SK-N-SH (cell line): ENCODE measurements at regions of chr1 and their contacts with region 1.

Region 1: GRCh38 chr1:59699227-59699847 is 115.4 kb upstream of the HOOK1 start:
- DNase-seq: peak; percentile 31
- H3K4me3 ChIP-seq: peak overlapping the region in 1 of 2 experiments; percentile 24; a peak in 1 of 4 replicates
- H3K27ac ChIP-seq: peak overlapping the region; percentile 56 to 68; a peak in 3 of 4 replicates
- H3K4me1 ChIP-seq: peaks cover 12 to 23% of the 10 kb centered on the region in 2 experiments
- H3K27me3 ChIP-seq: no peaks in the 10 kb centered on the region
- CTCF ChIP-seq: peak; percentile 98
- EP300 ChIP-seq: no peak
- RAD21 ChIP-seq: peak; percentile 96

Region 2: DNA sequence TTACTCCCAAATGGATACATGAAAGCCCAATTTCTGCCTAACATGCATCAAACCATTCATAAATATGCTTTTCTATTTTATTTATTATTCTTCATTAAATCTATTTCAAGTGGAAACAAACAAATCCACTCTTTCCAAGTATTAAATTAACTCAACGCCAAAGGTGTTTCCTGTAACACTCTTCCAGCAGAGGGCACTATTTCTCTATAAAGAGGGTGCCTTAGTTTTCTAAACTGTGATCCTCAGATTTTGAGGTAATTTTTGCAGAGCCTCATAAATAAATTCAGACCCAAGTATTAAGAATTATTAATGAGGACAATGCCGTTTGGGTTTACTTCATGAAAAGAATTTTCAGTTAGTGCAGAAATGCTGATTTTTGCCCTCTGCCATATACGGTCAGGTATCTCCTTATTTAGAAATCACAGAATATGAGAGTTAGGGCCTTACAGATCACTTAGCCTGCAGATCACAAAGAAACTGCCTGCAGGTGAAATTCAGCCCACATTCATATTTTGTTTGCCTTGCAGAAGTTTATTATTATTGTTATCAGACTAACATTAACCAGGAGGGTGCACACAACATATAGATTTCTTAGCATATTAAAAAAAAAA is 959.4 kb before region 1 on chr1:
- CTCF ChIA-PET with region 1: interaction called, 48 read pairs
- POLR2A ChIA-PET with region 1: no interaction called
- DNase-seq: peak; percentile 60
- H3K4me3 ChIP-seq: no peak overlapping the region; a peak in 1 of 4 replicates
- H3K27ac ChIP-seq: no peak overlapping the region
- H3K4me1 ChIP-seq: no peaks in the 10 kb centered on the region; a peak in 2 of 4 replicates
- H3K27me3 ChIP-seq: no peaks in the 10 kb centered on the region
- CTCF ChIP-seq: peak; percentile 94
- EP300 ChIP-seq: no peak
- RAD21 ChIP-seq: peak; percentile 94

Region 3: DNA sequence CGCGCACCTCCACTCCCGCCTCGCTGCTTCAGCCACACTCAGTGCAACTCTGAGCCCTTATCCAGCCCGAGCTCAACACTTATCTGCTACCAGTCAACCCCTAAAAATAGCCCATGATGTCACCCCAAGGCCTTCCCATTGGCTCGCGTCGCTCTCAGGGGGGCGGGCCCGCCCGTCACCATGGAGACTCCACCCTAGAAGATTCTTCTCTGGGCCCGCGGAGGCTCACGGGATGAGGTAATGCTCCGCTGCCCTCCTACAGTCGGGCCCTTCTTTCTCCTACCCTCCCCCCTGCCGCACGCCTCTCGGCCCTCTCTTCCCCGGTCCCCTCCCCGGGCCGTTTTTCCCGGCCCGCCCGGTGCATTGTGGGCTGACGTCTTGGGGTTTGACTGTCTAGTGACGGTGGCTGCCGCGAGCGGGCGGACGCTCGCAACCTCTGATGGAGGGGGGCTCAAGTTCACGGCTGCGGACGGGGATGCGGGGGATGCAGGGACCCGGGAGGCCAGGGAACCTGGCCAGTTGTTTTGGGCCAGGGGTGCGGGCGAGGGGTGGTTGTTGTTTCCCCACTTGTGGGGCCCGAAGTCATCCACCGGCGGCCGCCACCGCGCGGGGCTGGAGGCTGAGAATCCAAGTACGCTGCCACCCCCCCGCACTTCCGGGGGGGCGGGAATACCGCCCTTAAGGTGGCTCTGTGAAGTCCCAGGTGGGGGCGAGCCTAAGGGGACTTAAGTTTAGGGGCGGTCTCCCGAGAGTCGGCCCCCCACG is 915.2 kb before region 1 on chr1 and contains the start of gene JUN:
- CTCF ChIA-PET with region 1: interaction called, 27 read pairs
- POLR2A ChIA-PET with region 1: no interaction called
- DNase-seq: peak; percentile 96
- H3K4me3 ChIP-seq: peak within 1 kb of the TSS; percentile 86 to 89
- H3K27ac ChIP-seq: peak within 1 kb of the TSS; percentile 93 to 98
- H3K4me1 ChIP-seq: peaks cover 5 to 25% of the 10 kb centered on the region in 2 experiments; a peak in 2 of 4 replicates
- H3K27me3 ChIP-seq: no peaks in the 10 kb centered on the region
- CTCF ChIP-seq: no peak
- EP300 ChIP-seq: no peak
- RAD21 ChIP-seq: no peak
- polyA plus RNA-seq, gene JUN: 54.6 and 66.5 TPM in 2 replicates

Region 4: GRCh38 chr1:59076612-59077011 is 622.7 kb before region 1 on chr1:
- CTCF ChIA-PET with region 1: interaction called, 15 read pairs
- POLR2A ChIA-PET with region 1: no interaction called
- DNase-seq: peak; percentile 39
- H3K4me3 ChIP-seq: no peak overlapping the region
- H3K27ac ChIP-seq: no peak overlapping the region
- H3K4me1 ChIP-seq: peaks cover 7 to 20% of the 10 kb centered on the region in 2 experiments
- H3K27me3 ChIP-seq: no peaks in the 10 kb centered on the region
- CTCF ChIP-seq: peak; percentile 49
- EP300 ChIP-seq: no peak
- RAD21 ChIP-seq: peak; percentile 55

Region 5: GRCh38 chr1:59446257-59446901 is 253.0 kb before region 1 on chr1:
- CTCF ChIA-PET with region 1: interaction called, 11 read pairs
- POLR2A ChIA-PET with region 1: no interaction called
- DNase-seq: peak; percentile 55
- H3K4me3 ChIP-seq: no peak overlapping the region
- H3K27ac ChIP-seq: peak overlapping the region; percentile 88 to 98
- H3K4me1 ChIP-seq: peaks cover 35 to 53% of the 10 kb centered on the region in 2 experiments
- H3K27me3 ChIP-seq: no peaks in the 10 kb centered on the region
- CTCF ChIP-seq: no peak
- EP300 ChIP-seq: peak; percentile 89 to 96
- RAD21 ChIP-seq: peak; percentile 39

Region 6: GRCh38 chr1:59678493-59679228 is 20.7 kb before region 1 on chr1:
- CTCF ChIA-PET with region 1: interaction called, 11 read pairs
- POLR2A ChIA-PET with region 1: no interaction called
- DNase-seq: no peak
- H3K4me3 ChIP-seq: no peak overlapping the region
- H3K27ac ChIP-seq: peak overlapping the region; percentile 65 to 83; a peak in 3 of 4 replicates
- H3K4me1 ChIP-seq: peaks cover 9 to 10% of the 10 kb centered on the region in 2 experiments; a peak in 3 of 4 replicates
- H3K27me3 ChIP-seq: no peaks in the 10 kb centered on the region
- CTCF ChIP-seq: no peak
- EP300 ChIP-seq: peak; percentile 21 to 86; a peak in 3 of 4 replicates
- RAD21 ChIP-seq: no peak

Region 7: GRCh38 chr1:59718064-59718988 is 19.0 kb after region 1 on chr1:
- CTCF ChIA-PET with region 1: interaction called, 31 read pairs
- POLR2A ChIA-PET with region 1: no interaction called
- DNase-seq: no peak
- H3K4me3 ChIP-seq: no peak overlapping the region
- H3K27ac ChIP-seq: no peak overlapping the region
- H3K4me1 ChIP-seq: peaks cover 0 to 10% of the 10 kb centered on the region in 2 experiments; a peak in 2 of 4 replicates
- H3K27me3 ChIP-seq: no peaks in the 10 kb centered on the region
- CTCF ChIP-seq: peak; percentile 72
- EP300 ChIP-seq: no peak
- RAD21 ChIP-seq: peak; percentile 64